ENCODE measurements at regions of chr21 and their contacts with region 1.

Region 1: GRCh38 chr21:39208624-39209333 is 25.5 kb upstream of the PSMG1 start:
- DNase-seq: peak; percentile 20
- H3K4me3 Mint-ChIP-seq: no peak overlapping the region
- H3K27ac Mint-ChIP-seq: peak overlapping the region; percentile 68
- H3K4me1 Mint-ChIP-seq: peaks cover 34% of the 10 kb centered on the region
- H3K27me3 Mint-ChIP-seq: no peaks in the 10 kb centered on the region

Region 2: DNA sequence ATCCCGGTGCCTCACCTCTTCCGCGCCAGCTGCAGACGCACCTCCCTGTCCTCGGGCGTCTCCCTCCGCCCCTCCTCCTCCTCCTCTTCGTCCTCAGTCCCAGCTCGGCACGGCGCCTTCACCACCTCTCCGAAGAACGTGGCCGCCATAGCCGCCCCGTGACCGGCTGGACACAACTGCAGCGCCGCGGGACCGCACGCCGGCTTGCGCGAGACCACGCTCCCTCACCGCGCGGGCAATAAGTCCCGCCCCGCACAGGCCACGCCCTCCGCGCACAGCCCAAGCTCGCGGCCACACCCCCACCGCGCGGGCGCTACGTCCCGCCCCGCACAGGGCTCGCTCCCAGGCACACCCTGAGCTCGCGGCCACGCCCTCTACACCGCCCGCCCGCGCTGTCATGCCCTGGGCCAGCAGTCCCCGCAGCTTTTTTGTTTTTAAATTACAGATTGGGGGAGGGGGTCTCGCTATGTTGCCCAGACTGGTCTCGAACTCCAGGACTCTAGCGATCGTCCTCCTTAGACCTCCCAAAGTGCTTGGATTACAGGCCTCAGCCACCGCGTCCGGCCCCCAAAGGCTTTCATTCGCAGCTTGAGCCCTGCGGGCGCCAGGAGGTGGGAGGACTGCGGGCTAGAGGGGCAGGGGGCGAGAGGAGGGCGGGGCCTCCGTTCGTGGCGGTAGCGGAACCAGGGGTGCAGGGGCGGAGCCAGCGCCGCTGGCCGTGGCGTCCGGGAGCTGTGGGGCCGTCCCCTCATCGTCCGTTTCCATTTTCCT is 25.4 kb before region 1 on chr21 and contains the start of gene PSMG1:
- CTCF ChIA-PET with region 1: no interaction called
- intact Hi-C with region 1: loop called (anchors 2 kb)
- DNase-seq: peak; percentile 94
- H3K4me3 Mint-ChIP-seq: peak within 1 kb of the TSS; percentile 92
- H3K27ac Mint-ChIP-seq: peak within 1 kb of the TSS; percentile 90
- H3K4me1 Mint-ChIP-seq: peaks cover 62% of the 10 kb centered on the region
- H3K27me3 Mint-ChIP-seq: no peaks in the 10 kb centered on the region
- total RNA-seq, gene PSMG1: 70.8 to 70.9 TPM

Region 3: DNA sequence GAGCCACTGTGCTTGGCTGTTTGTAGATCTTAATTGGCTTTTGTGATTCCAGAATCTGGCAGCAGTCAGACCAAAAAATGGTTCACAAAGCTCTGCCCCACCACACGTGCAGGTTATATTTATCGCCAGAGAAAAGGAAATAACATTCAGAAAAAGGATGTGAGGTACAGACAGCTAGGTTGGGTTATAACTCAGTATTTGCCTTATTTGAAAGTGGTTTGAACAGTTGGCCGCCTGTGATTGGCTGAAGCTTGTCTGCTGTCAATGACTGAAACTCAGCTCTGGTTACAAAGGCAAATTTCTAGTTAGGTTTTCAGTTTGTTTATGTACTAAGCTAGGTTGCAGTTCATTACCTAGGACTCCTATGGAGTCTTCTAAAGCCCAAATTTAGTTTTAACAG is 252.6 kb after region 1 on chr21:
- CTCF ChIA-PET with region 1: no interaction called
- intact Hi-C with region 1: no loop called
- DNase-seq: peak; percentile 10
- H3K4me3 Mint-ChIP-seq: no peak overlapping the region
- H3K27ac Mint-ChIP-seq: no peak overlapping the region
- H3K4me1 Mint-ChIP-seq: peaks cover 2% of the 10 kb centered on the region
- H3K27me3 Mint-ChIP-seq: no peaks in the 10 kb centered on the region